ENCODE measurements at regions of chr11 and their contacts with region 1.

Region 1: GRCh38 chr11:9460322-9461067 is at the start of gene ZNF143:
- DNase-seq: peak; percentile 99
- ATAC-seq: peak; percentile 85
- H3K4me3 Mint-ChIP-seq: peak within 1 kb of the TSS; percentile 97
- H3K27ac Mint-ChIP-seq: peak within 1 kb of the TSS; percentile 98
- H3K4me1 Mint-ChIP-seq: peaks cover 30% of the 10 kb centered on the region
- H3K27me3 Mint-ChIP-seq: no peaks in the 10 kb centered on the region
- CTCF ChIP-seq: no peak
- total RNA-seq, gene ZNF143: 37.8 and 41.1 TPM in 2 replicates

Region 2: GRCh38 chr11:8839957-8840945 is 620.2 kb before region 1 on chr11:
- CTCF ChIA-PET with region 1: no interaction called
- POLR2A ChIA-PET with region 1: no interaction called
- intact Hi-C with region 1: no loop called
- DNase-seq: no peak
- ATAC-seq: no peak
- H3K4me3 Mint-ChIP-seq: no peak overlapping the region
- H3K27ac Mint-ChIP-seq: no peak overlapping the region
- H3K4me1 Mint-ChIP-seq: no peaks in the 10 kb centered on the region
- H3K27me3 Mint-ChIP-seq: no peaks in the 10 kb centered on the region
- CTCF ChIP-seq: no peak

Region 3: GRCh38 chr11:8964324-8965320 is 495.9 kb before region 1 on chr11 and contains the start of gene TMEM9B:
- CTCF ChIA-PET with region 1: no interaction called
- POLR2A ChIA-PET with region 1: interaction called, 16 read pairs
- intact Hi-C with region 1: no loop called
- DNase-seq: peak; percentile 84
- ATAC-seq: peak; percentile 82
- H3K4me3 Mint-ChIP-seq: peak within 1 kb of the TSS; percentile 96
- H3K27ac Mint-ChIP-seq: peak within 1 kb of the TSS; percentile 92
- H3K4me1 Mint-ChIP-seq: peaks cover 35% of the 10 kb centered on the region
- H3K27me3 Mint-ChIP-seq: no peaks in the 10 kb centered on the region
- CTCF ChIP-seq: no peak
- total RNA-seq, gene TMEM9B: 29.0 and 29.6 TPM in 2 replicates

Region 4: DNA sequence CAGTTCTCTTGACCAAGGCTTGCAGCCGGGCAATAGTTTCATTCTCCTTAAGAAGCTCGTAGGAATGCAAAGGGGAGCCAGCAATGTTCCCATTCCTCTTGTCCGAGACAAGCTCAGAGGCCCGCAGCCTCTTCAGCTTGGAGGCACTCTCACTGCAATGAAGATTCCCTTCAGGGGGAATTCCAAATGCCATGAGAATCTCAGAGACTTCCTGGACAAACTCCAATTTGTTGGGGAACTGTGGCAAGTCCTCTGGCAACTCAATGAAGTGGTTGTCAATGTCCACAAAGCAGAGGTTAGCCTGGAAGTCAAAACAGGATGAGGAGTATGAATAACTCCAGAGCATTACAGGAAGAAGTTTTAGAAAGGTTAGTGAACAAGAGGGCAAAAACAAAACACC is 279.7 kb before region 1 on chr11:
- CTCF ChIA-PET with region 1: no interaction called
- POLR2A ChIA-PET with region 1: no interaction called
- intact Hi-C with region 1: no loop called
- DNase-seq: no peak
- ATAC-seq: no peak
- H3K4me3 Mint-ChIP-seq: no peak overlapping the region
- H3K27ac Mint-ChIP-seq: no peak overlapping the region
- H3K4me1 Mint-ChIP-seq: no peaks in the 10 kb centered on the region
- H3K27me3 Mint-ChIP-seq: no peaks in the 10 kb centered on the region
- CTCF ChIP-seq: no peak

Region 5: GRCh38 chr11:9363954-9364912 is 96.3 kb before region 1 on chr11:
- CTCF ChIA-PET with region 1: no interaction called
- POLR2A ChIA-PET with region 1: interaction called, 16 read pairs
- intact Hi-C with region 1: loop called (anchors 1 kb)
- DNase-seq: peak; percentile 74
- ATAC-seq: peak; percentile 97
- H3K4me3 Mint-ChIP-seq: peak overlapping the region; percentile 86
- H3K27ac Mint-ChIP-seq: peak overlapping the region; percentile 89
- H3K4me1 Mint-ChIP-seq: peaks cover 8% of the 10 kb centered on the region
- H3K27me3 Mint-ChIP-seq: no peaks in the 10 kb centered on the region
- CTCF ChIP-seq: no peak

Region 6: GRCh38 chr11:9479899-9480298 is 19.4 kb after region 1 on chr11:
- CTCF ChIA-PET with region 1: no interaction called
- POLR2A ChIA-PET with region 1: interaction called, 10 read pairs
- intact Hi-C with region 1: no loop called
- DNase-seq: no peak
- ATAC-seq: no peak
- H3K4me3 Mint-ChIP-seq: no peak overlapping the region
- H3K27ac Mint-ChIP-seq: no peak overlapping the region
- H3K4me1 Mint-ChIP-seq: peaks cover 6% of the 10 kb centered on the region
- H3K27me3 Mint-ChIP-seq: no peaks in the 10 kb centered on the region
- CTCF ChIP-seq: no peak

Region 7: DNA sequence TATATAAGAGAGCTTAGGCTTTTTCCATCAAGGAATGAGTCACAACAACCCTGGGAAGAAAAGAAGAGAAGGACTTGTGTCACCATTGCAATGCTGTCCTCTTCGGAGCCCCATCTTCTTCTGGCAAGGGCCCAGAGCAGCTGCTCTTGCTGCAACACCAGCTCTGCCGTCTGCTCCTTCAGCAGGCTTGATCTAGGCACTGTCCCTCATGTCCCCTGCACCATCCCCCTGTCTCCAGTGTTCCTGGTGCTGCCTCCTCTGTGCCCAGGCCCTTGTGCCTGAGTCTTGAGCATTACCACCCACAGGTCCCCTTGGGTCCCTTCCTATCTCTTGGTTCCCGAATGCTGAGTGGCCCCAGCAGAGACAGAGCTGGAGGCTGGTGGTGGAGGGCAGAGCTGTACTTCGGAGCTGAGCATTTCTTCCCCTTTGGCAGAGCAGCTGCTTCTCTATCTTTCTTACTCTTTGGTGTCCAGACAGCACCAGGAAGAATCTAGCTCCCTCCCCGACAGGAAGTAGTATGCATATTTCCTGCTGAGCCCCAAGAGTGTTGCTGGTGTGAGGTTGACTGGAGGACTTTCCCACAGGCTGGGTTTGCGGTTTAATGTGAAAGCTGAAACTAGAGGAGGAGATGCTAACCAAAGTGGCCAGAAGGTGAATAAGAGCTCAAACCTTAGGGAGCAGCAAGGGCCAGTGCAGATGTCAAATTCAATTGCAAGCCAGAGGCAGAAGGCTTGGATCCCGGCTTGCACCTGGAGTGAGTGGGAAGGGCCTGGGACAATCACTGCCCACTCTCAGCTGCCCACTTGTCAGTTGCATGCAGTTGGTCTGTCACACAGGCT is 140.8 kb after region 1 on chr11:
- CTCF ChIA-PET with region 1: no interaction called
- POLR2A ChIA-PET with region 1: interaction called, 24 read pairs
- intact Hi-C with region 1: loop called (anchors 2 kb)
- DNase-seq: peak; percentile 53
- ATAC-seq: peak; percentile 76
- H3K4me3 Mint-ChIP-seq: peak overlapping the region; percentile 85
- H3K27ac Mint-ChIP-seq: peak overlapping the region; percentile 96
- H3K4me1 Mint-ChIP-seq: peaks cover 59% of the 10 kb centered on the region
- H3K27me3 Mint-ChIP-seq: no peaks in the 10 kb centered on the region
- CTCF ChIP-seq: no peak

Region 8: GRCh38 chr11:10307442-10308207 is 847.1 kb after region 1 on chr11:
- CTCF ChIA-PET with region 1: no interaction called
- POLR2A ChIA-PET with region 1: interaction called, 3 read pairs
- intact Hi-C with region 1: loop called (anchors 5 kb)
- DNase-seq: peak; percentile 75
- ATAC-seq: peak; percentile 76
- H3K4me3 Mint-ChIP-seq: peak overlapping the region; percentile 97
- H3K27ac Mint-ChIP-seq: peak overlapping the region; percentile 67
- H3K4me1 Mint-ChIP-seq: peaks cover 44% of the 10 kb centered on the region
- H3K27me3 Mint-ChIP-seq: peaks cover 8% of the 10 kb centered on the region
- CTCF ChIP-seq: peak; percentile 95

Region 9: DNA sequence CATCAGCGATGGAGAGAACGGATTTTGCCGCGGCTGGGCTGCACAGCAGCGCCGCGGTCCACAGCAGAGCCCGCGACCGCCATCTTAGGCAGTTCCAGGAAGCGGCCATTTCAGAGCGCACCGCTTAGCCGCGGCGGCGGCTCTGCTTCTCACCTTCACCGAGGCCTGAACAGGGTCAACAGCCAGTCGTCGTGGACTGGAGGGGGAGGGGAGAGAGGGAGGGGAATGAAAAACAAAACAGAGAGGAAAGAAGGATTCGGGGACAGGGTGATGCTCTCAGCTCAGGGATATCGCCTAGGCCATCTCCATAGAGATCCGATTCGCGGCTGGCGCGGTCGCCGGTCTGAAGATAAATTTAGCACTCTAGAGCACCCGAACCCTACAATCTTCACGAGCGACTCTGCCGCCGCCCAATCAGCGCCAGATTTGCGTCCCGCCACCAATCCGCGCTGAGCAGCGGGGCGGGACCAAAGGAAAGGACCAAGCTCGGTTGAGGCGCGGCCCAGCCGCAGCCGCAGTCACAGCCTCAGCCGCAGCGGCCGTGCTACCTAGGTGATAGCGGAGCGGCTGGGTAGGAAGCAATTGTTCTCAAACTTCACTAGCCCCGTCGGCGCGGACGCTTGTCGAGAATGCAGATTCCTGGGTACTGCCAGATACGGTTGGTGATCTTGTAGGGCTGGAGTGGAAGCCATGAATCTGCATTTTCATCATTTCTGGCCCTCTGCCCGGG is 1397.4 kb after region 1 on chr11 and contains the start of gene ZBED5:
- CTCF ChIA-PET with region 1: no interaction called
- POLR2A ChIA-PET with region 1: interaction called, 11 read pairs
- intact Hi-C with region 1: loop called (anchors 10 kb)
- DNase-seq: peak; percentile 93
- ATAC-seq: peak; percentile 89
- H3K4me3 Mint-ChIP-seq: peak within 1 kb of the TSS; percentile 100
- H3K27ac Mint-ChIP-seq: peak within 1 kb of the TSS; percentile 100
- H3K4me1 Mint-ChIP-seq: peaks cover 48% of the 10 kb centered on the region
- H3K27me3 Mint-ChIP-seq: no peaks in the 10 kb centered on the region
- CTCF ChIP-seq: no peak
- total RNA-seq, gene ZBED5: 111 and 116 TPM in 2 replicates

Measured in activated B cell treated with CpG ODN at 0.5 μM for 24 hours (primary cell).